ENCODE measurements at regions of chr5 and their contacts with region 1.

Region 1: GRCh38 chr5:177552839-177553455 is 1.4 kb downstream of the FAM193B start:
- DNase-seq: no peak
- H3K4me3 ChIP-seq: peak overlapping the region; percentile 93
- H3K4me3 Mint-ChIP-seq: peak overlapping the region; percentile 81
- H3K27ac Mint-ChIP-seq: peak overlapping the region; percentile 73
- H3K4me1 ChIP-seq: peaks cover 18% of the 10 kb centered on the region
- H3K4me1 Mint-ChIP-seq: peaks cover 13% of the 10 kb centered on the region
- H3K27me3 ChIP-seq: no peaks in the 10 kb centered on the region
- H3K27me3 Mint-ChIP-seq: no peaks in the 10 kb centered on the region
- CTCF ChIP-seq: no peak

Region 2: DNA sequence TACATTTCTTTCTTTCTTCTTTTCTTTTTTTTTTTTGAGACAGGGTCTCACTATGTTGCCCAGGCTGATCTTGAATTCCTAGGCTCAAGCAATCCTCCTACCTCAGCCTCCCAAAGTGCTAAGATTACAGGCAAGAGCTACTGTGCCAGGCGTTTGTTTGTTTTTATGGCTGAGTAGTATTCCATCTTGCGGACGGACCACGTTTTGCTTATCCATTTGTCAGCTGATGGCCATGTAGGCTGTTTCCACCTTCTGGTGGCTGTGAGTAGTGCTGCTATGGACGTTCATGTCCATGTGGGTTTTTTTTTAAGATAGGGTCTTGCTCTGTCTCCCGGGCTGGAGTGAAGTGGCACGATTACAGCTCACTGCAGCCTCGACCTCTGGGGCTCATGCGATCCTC is 45.8 kb before region 1 on chr5:
- CTCF ChIA-PET with region 1: no interaction called
- POLR2A ChIA-PET with region 1: interaction called, 13 read pairs
- intact Hi-C with region 1: no loop called
- DNase-seq: no peak
- H3K4me3 ChIP-seq: no peak overlapping the region
- H3K4me3 Mint-ChIP-seq: no peak overlapping the region
- H3K27ac Mint-ChIP-seq: no peak overlapping the region
- H3K4me1 ChIP-seq: no peaks in the 10 kb centered on the region
- H3K4me1 Mint-ChIP-seq: peaks cover 6% of the 10 kb centered on the region
- H3K27me3 ChIP-seq: no peaks in the 10 kb centered on the region
- H3K27me3 Mint-ChIP-seq: no peaks in the 10 kb centered on the region
- CTCF ChIP-seq: peak; percentile 0 to 32

Region 3: GRCh38 chr5:177588413-177588909 is 35.5 kb after region 1 on chr5:
- CTCF ChIA-PET with region 1: no interaction called
- POLR2A ChIA-PET with region 1: no interaction called
- intact Hi-C with region 1: loop called (anchors 1 kb)
- DNase-seq: peak; percentile 79 to 84
- H3K4me3 ChIP-seq: no peak overlapping the region
- H3K4me3 Mint-ChIP-seq: peak overlapping the region; percentile 68
- H3K27ac Mint-ChIP-seq: peak overlapping the region; percentile 49
- H3K4me1 ChIP-seq: peaks cover 22% of the 10 kb centered on the region
- H3K4me1 Mint-ChIP-seq: peaks cover 20% of the 10 kb centered on the region
- H3K27me3 ChIP-seq: no peaks in the 10 kb centered on the region; the same call in none of the 2 replicates
- H3K27me3 Mint-ChIP-seq: peaks cover 8% of the 10 kb centered on the region
- CTCF ChIP-seq: peak in 1 of 2 experiments; percentile 13